Head of caudate nucleus (tissue), 42 donors: ENCODE measurements at regions of chr19 and their contacts with region 1.

Region 1: GRCh38 chr19:56076498-56076897 is 44.6 kb downstream of the ZNF787 start:
- DNase-seq: peak in 32 of 42 donors; percentile 26 to 82 (median 58)

Region 2: GRCh38 chr19:56170261-56170660 is 93.8 kb after region 1 on chr19:
- intact Hi-C with region 1: loop called (anchors 5 kb)
- DNase-seq: no peak